ENCODE measurements at regions of chr4 and their contacts with region 1.

Region 1: GRCh38 chr4:58809948-58810347 is 1699.8 kb upstream of the IGFBP7 start:
- DNase-seq: no peak
- ATAC-seq: no peak
- H3K4me3 ChIP-seq: no peak overlapping the region
- H3K27ac ChIP-seq: no peak overlapping the region
- H3K4me1 ChIP-seq: no peaks in the 10 kb centered on the region
- H3K27me3 ChIP-seq: no peaks in the 10 kb centered on the region
- CTCF ChIP-seq: no peak
- POLR2A ChIP-seq: no peak
- RAD21 ChIP-seq: no peak

Region 2: GRCh38 chr4:57706241-57706640 is 1103.7 kb before region 1 on chr4:
- CTCF ChIA-PET with region 1: no interaction called
- POLR2A ChIA-PET with region 1: no interaction called
- dilution Hi-C with region 1: no loop called
- in situ Hi-C with region 1: no loop called
- intact Hi-C with region 1: loop called (anchors 5 kb)
- DNase-seq: no peak
- ATAC-seq: no peak
- H3K4me3 ChIP-seq: no peak overlapping the region
- H3K27ac ChIP-seq: no peak overlapping the region
- H3K4me1 ChIP-seq: no peaks in the 10 kb centered on the region
- H3K27me3 ChIP-seq: no peaks in the 10 kb centered on the region
- CTCF ChIP-seq: no peak
- POLR2A ChIP-seq: no peak
- RAD21 ChIP-seq: no peak

Region 3: GRCh38 chr4:58435871-58436270 is 374.1 kb before region 1 on chr4:
- CTCF ChIA-PET with region 1: no interaction called
- POLR2A ChIA-PET with region 1: no interaction called
- dilution Hi-C with region 1: no loop called
- in situ Hi-C with region 1: no loop called
- intact Hi-C with region 1: no loop called
- DNase-seq: no peak
- ATAC-seq: no peak
- H3K4me3 ChIP-seq: no peak overlapping the region
- H3K27ac ChIP-seq: no peak overlapping the region
- H3K4me1 ChIP-seq: no peaks in the 10 kb centered on the region
- H3K27me3 ChIP-seq: no peaks in the 10 kb centered on the region
- CTCF ChIP-seq: no peak
- POLR2A ChIP-seq: no peak
- RAD21 ChIP-seq: no peak

Region 4: DNA sequence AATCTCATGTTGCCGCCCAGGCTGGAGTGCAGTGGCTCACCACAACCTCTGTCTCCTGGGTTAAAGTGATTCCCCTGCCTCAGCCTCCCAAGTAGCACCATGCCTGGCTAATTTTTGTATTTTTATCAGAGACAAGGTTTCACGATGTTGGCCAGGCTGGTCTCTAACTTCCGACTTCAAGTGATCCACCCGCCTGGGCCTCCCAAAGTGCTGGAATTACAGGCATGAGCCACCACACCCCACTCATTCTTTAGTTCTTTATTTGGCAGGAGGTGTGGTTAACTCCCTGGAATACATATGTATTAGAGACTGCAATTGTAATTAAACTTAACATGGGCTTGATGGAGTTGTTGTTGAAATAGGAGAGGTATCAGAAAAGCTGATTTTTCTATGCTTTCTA is 302.9 kb before region 1 on chr4:
- CTCF ChIA-PET with region 1: no interaction called
- POLR2A ChIA-PET with region 1: no interaction called
- dilution Hi-C with region 1: no loop called
- in situ Hi-C with region 1: no loop called
- intact Hi-C with region 1: no loop called
- DNase-seq: no peak
- ATAC-seq: no peak
- H3K4me3 ChIP-seq: no peak overlapping the region
- H3K27ac ChIP-seq: no peak overlapping the region
- H3K4me1 ChIP-seq: no peaks in the 10 kb centered on the region
- H3K27me3 ChIP-seq: no peaks in the 10 kb centered on the region
- CTCF ChIP-seq: no peak
- POLR2A ChIP-seq: no peak
- RAD21 ChIP-seq: no peak

Region 5: DNA sequence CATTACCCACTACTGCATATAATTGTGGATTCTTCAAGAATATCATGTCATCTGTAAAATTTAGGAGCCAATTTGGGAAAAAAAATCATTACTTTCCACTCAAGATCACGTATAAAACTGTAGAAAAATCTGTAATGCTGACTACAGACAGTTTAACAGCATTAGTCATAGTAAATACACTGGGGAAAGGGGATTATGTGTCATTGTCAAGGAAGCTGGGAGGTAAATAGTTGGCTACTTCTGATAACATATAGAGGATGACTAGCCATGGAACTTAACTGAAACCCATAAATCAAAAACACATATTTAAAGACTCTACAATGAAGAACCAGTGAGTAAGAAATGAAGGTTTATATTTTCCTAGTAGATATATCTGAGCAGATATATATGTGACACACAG is 33.3 kb before region 1 on chr4:
- CTCF ChIA-PET with region 1: no interaction called
- POLR2A ChIA-PET with region 1: no interaction called
- dilution Hi-C with region 1: no loop called
- in situ Hi-C with region 1: no loop called
- intact Hi-C with region 1: no loop called
- DNase-seq: peak; percentile 90
- ATAC-seq: peak; percentile 96
- H3K4me3 ChIP-seq: no peak overlapping the region
- H3K27ac ChIP-seq: no peak overlapping the region
- H3K4me1 ChIP-seq: no peaks in the 10 kb centered on the region; the same call in 1 of the 2 replicates
- H3K27me3 ChIP-seq: no peaks in the 10 kb centered on the region
- CTCF ChIP-seq: no peak
- POLR2A ChIP-seq: no peak
- RAD21 ChIP-seq: no peak